CD4-positive, alpha-beta T cell (primary cell): ENCODE measurements at regions of chr7 and their contacts with region 1.

Region 1: DNA sequence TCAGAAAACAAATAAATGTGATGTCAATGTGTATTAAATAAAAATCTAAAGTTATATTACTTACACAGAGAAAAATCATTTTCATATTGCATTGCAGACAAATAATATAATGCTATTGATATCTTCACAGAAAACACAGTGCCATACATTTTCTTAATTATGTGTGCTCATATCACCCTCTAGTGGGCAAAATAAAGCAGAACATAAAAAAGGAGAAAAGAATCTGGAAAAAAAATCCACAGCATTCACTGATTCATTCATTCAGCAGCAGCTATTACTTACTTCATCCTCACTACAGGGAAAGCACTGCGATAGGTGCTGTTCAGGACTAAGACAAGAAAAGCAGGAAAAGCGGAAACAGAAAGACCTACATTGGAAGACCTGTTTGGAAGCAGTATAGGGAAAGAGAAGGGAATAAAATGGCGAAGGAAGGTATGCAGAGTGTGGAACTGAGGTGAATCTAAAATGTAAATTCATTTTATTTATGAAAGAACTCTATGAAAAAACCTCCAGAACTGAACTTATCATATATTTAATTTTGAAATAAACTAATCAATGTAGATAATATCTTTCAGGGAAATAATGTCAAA is 73.2 kb downstream of the POT1 start:
- DNase-seq: peak in 3 of 14 experiments; percentile 28 to 41 (median 32)
- ATAC-seq: no peak
- H3K4me3 ChIP-seq: no peak overlapping the region
- H3K4me3 Mint-ChIP-seq: no peak overlapping the region
- H3K27ac ChIP-seq: no peak overlapping the region
- H3K27ac Mint-ChIP-seq: no peak overlapping the region
- H3K4me1 ChIP-seq: no peaks in the 10 kb centered on the region
- H3K4me1 Mint-ChIP-seq: no peaks in the 10 kb centered on the region
- H3K27me3 ChIP-seq: no peaks in the 10 kb centered on the region
- H3K27me3 Mint-ChIP-seq: no peaks in the 10 kb centered on the region
- CTCF ChIP-seq: peak; percentile 69

Region 2: DNA sequence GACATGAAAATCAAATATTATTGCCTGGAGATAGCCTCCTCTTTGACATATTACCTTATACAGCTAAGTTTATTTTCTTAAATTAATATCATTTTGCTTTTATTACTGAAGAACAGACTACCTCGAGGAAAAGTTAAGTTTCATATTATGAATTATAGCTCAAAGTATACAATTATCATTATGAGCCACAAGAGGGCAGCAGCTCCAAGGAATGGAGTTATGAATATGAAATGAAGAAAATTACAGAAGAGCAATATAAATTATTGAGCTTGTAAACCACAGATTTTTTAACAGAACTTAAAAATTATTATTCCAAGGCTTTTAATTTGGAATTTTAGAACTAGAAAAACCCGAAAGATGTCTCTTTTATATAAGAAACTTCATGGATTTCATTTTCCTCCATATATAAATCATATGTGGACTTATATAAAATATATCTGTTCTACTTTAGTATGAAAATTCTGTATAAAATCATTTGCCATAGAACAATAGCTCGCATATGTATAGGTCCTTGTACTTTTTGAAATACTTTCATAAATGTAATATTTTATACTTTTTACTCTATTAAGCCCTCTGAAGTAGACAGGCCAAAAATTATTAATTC is 1362.1 kb before region 1 on chr7:
- CTCF ChIA-PET with region 1: no interaction called
- POLR2A ChIA-PET with region 1: no interaction called
- intact Hi-C with region 1: loop called in 1 of 2 experiments (anchors 10 kb)
- DNase-seq: peak in 9 of 14 experiments; percentile 1 to 68 (median 17)
- ATAC-seq: no peak
- H3K4me3 ChIP-seq: no peak overlapping the region
- H3K4me3 Mint-ChIP-seq: no peak overlapping the region
- H3K27ac ChIP-seq: no peak overlapping the region
- H3K27ac Mint-ChIP-seq: no peak overlapping the region
- H3K4me1 ChIP-seq: no peaks in the 10 kb centered on the region
- H3K4me1 Mint-ChIP-seq: no peaks in the 10 kb centered on the region
- H3K27me3 ChIP-seq: peaks cover 0 to 5% of the 10 kb centered on the region in 2 experiments
- H3K27me3 Mint-ChIP-seq: peaks cover 27% of the 10 kb centered on the region
- CTCF ChIP-seq: peak; percentile 86

Region 3: DNA sequence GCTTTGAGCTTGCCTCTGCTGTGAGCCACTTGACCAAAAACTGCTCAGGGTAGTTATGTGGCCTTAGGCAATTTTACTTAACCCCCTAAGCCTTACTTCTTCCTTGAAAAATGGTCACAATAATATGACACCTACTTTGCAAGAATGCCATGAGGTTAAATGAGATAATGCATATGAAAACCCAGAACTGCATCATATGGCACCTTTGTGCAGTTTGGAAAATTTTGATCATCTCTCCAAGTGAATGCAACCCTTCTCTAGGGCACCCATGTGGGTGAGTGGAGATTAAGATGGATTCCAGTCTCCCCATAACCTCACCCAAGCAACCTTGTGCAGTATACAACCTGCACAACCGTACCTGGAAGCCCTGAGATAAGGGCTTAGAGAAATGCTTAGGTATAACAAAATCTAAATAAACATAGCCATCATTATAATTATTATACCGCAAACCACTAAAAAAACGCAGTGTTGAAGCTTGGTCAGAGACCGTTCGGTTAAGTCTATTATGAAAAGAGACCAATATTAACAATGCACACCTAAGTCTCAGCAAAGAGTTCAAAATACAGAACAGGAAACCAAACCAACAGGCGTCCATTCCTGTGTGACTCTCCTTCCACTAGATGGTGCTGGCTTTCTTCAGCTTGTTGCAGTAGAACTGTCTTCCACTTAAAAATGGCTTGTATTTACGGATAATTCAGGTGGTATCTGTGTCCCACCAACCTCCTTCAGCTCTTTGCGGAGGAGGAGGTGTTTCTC is 1275.8 kb before region 1 on chr7:
- CTCF ChIA-PET with region 1: no interaction called
- POLR2A ChIA-PET with region 1: no interaction called
- intact Hi-C with region 1: loop called in 1 of 2 experiments (anchors 10 kb)
- DNase-seq: peak in 3 of 14 experiments; percentile 11 to 32 (median 25)
- ATAC-seq: peak; percentile 41
- H3K4me3 ChIP-seq: no peak overlapping the region
- H3K4me3 Mint-ChIP-seq: no peak overlapping the region
- H3K27ac ChIP-seq: no peak overlapping the region
- H3K27ac Mint-ChIP-seq: no peak overlapping the region
- H3K4me1 ChIP-seq: no peaks in the 10 kb centered on the region
- H3K4me1 Mint-ChIP-seq: no peaks in the 10 kb centered on the region
- H3K27me3 ChIP-seq: peaks cover 0 to 9% of the 10 kb centered on the region in 2 experiments
- H3K27me3 Mint-ChIP-seq: peaks cover 31% of the 10 kb centered on the region
- CTCF ChIP-seq: peak; percentile 18

Region 4: GRCh38 chr7:123635551-123636359 is 1220.6 kb before region 1 on chr7:
- CTCF ChIA-PET with region 1: no interaction called
- POLR2A ChIA-PET with region 1: no interaction called
- intact Hi-C with region 1: loop called in 1 of 2 experiments (anchors 5 kb)
- DNase-seq: peak in 2 of 14 experiments; percentile 9 to 22
- ATAC-seq: no peak
- H3K4me3 ChIP-seq: no peak overlapping the region
- H3K4me3 Mint-ChIP-seq: no peak overlapping the region
- H3K27ac ChIP-seq: no peak overlapping the region
- H3K27ac Mint-ChIP-seq: no peak overlapping the region
- H3K4me1 ChIP-seq: no peaks in the 10 kb centered on the region
- H3K4me1 Mint-ChIP-seq: no peaks in the 10 kb centered on the region
- H3K27me3 ChIP-seq: peaks cover 0 to 12% of the 10 kb centered on the region in 2 experiments
- H3K27me3 Mint-ChIP-seq: peaks cover 25% of the 10 kb centered on the region
- CTCF ChIP-seq: no peak

Region 5: GRCh38 chr7:123682690-123683089 is 1173.7 kb before region 1 on chr7:
- CTCF ChIA-PET with region 1: no interaction called
- POLR2A ChIA-PET with region 1: no interaction called
- intact Hi-C with region 1: loop called (anchors 2 to 5 kb)
- DNase-seq: peak in 4 of 14 experiments; percentile 24 to 60 (median 57)
- ATAC-seq: no peak
- H3K4me3 ChIP-seq: no peak overlapping the region
- H3K4me3 Mint-ChIP-seq: no peak overlapping the region
- H3K27ac ChIP-seq: no peak overlapping the region
- H3K27ac Mint-ChIP-seq: no peak overlapping the region
- H3K4me1 ChIP-seq: no peaks in the 10 kb centered on the region
- H3K4me1 Mint-ChIP-seq: no peaks in the 10 kb centered on the region
- H3K27me3 ChIP-seq: no peaks in the 10 kb centered on the region
- H3K27me3 Mint-ChIP-seq: no peaks in the 10 kb centered on the region
- CTCF ChIP-seq: peak; percentile 68

Region 6: DNA sequence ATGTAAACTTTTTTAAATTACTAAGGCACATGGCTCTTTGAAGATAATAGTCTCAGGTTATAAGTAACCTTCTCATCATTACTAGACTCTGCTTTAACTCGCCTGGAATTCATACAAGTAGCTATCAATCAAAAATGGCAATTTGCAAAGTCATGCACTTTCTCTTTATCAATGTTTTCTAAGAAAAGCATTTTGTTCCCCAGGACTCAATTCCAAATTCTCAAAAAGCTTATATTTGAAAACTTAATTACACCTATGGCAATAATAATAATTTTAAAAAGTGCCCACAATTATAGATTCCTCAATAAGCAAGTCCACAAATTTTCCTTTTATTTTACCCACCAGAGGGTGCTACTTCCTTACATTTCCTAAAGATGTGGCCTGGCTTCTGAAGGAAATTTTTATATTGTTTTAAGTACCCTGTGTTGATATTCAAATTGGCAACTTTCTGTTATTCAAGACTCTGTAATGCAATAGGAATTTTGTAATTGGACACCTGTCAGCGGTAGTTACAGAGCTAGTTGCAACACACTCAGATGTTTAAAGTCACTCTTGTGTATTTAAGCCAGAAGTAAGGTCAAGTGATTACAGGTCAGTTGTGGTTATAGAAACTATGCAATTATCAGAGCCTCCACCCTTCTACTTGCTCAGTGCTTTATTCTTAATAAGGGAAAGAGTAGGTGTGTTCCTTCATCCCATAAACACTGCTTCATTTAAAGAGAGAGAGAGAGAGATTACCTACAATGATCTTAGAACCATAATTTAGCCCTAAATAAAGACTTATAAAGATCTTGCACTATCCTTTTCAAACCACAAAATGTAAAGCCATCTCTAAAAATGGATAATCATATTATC is 1058.5 kb before region 1 on chr7:
- CTCF ChIA-PET with region 1: no interaction called
- POLR2A ChIA-PET with region 1: no interaction called
- intact Hi-C with region 1: loop called in 1 of 2 experiments (anchors 5 kb)
- DNase-seq: peak in 3 of 14 experiments; percentile 2 to 18 (median 11)
- ATAC-seq: no peak
- H3K4me3 ChIP-seq: no peak overlapping the region
- H3K4me3 Mint-ChIP-seq: no peak overlapping the region
- H3K27ac ChIP-seq: no peak overlapping the region
- H3K27ac Mint-ChIP-seq: no peak overlapping the region
- H3K4me1 ChIP-seq: no peaks in the 10 kb centered on the region
- H3K4me1 Mint-ChIP-seq: no peaks in the 10 kb centered on the region
- H3K27me3 ChIP-seq: no peaks in the 10 kb centered on the region
- H3K27me3 Mint-ChIP-seq: no peaks in the 10 kb centered on the region
- CTCF ChIP-seq: peak; percentile 19

Region 7: DNA sequence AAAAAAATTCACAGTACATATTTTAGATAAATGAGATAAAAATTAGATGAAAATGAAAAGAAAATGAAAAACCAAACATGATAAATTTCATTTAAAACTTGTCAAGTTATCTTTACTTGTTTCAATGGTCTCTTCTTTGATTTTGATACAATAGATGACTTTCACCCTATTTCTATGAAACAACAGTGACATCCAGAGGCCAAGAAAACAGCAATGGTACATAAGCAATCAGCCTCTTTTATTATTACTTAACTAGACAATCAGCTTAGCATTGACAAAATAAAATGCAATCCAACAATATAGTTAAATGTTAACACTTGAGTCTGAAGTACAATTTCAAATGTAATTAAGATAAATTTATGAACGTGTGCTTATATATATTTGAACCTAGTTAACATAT is 16.0 kb before region 1 on chr7:
- CTCF ChIA-PET with region 1: no interaction called
- POLR2A ChIA-PET with region 1: no interaction called
- intact Hi-C with region 1: loop called in 1 of 2 experiments (anchors 2 kb)
- DNase-seq: no peak
- ATAC-seq: no peak
- H3K4me3 ChIP-seq: no peak overlapping the region
- H3K4me3 Mint-ChIP-seq: no peak overlapping the region
- H3K27ac ChIP-seq: no peak overlapping the region
- H3K27ac Mint-ChIP-seq: no peak overlapping the region
- H3K4me1 ChIP-seq: no peaks in the 10 kb centered on the region
- H3K4me1 Mint-ChIP-seq: no peaks in the 10 kb centered on the region
- H3K27me3 ChIP-seq: no peaks in the 10 kb centered on the region
- H3K27me3 Mint-ChIP-seq: no peaks in the 10 kb centered on the region
- CTCF ChIP-seq: no peak